CD8-positive, alpha-beta T cell (primary cell): ENCODE measurements at regions of chr11 and their contacts with region 1.

Region 1: DNA sequence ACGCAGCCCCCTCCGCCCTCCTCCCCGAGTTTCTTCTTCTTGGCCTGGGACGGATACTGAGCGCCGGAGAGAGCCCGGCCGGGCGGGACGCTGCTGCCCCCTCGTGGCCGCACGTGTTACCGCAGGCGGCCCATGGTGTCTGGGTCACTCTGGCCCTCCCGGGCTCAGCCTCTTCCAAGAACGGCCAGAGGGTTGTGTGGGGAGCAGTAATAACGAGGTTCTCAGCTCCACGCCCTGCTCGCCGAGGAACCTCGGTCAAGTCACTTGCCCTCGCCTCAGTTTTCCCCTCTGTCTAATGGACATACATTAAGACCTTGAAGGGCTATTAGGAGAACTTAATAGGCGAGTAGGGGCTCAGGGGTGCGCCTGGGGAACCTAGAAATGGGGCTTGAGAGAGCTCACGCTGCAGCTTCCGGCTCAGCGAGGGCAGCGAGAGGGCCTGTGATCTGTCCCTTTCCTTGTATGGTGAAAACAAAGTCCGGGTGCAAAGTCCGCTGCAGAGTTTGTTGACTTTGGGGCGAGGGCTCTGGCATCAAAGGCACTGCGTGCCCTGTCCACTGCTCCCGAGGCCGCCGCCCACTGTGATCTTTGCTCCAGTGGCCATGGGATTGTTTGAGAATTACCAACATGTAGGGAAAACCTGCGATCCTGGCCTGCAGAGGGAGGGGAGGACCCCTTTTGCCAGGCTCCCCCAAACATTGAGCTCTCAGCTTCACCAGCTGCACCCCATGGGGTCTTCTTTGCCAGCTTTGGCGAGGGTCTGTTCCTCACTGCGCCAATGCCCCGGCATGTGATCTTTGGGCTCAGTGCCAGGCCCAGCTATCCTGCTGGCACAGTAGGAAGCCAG is 14.4 kb upstream of the LRP5 start:
- DNase-seq: peak; percentile 52 to 88 (median 70)
- ATAC-seq: peak; percentile 98
- H3K4me3 ChIP-seq: no peak overlapping the region
- H3K4me3 Mint-ChIP-seq: no peak overlapping the region
- H3K27ac ChIP-seq: no peak overlapping the region
- H3K27ac Mint-ChIP-seq: no peak overlapping the region
- H3K4me1 ChIP-seq: peaks cover 3% of the 10 kb centered on the region
- H3K4me1 Mint-ChIP-seq: no peaks in the 10 kb centered on the region
- H3K27me3 ChIP-seq: no peaks in the 10 kb centered on the region
- H3K27me3 Mint-ChIP-seq: no peaks in the 10 kb centered on the region
- CTCF ChIP-seq: peak; percentile 95

Region 2: GRCh38 chr11:68251765-68252164 is 46.3 kb before region 1 on chr11:
- CTCF ChIA-PET with region 1: interaction called, 359 read pairs
- POLR2A ChIA-PET with region 1: interaction called, 3 read pairs
- intact Hi-C with region 1: no loop called
- DNase-seq: no peak
- ATAC-seq: no peak
- H3K4me3 ChIP-seq: no peak overlapping the region
- H3K4me3 Mint-ChIP-seq: no peak overlapping the region
- H3K27ac ChIP-seq: no peak overlapping the region
- H3K27ac Mint-ChIP-seq: no peak overlapping the region
- H3K4me1 ChIP-seq: no peaks in the 10 kb centered on the region
- H3K4me1 Mint-ChIP-seq: no peaks in the 10 kb centered on the region
- H3K27me3 ChIP-seq: no peaks in the 10 kb centered on the region
- H3K27me3 Mint-ChIP-seq: no peaks in the 10 kb centered on the region
- CTCF ChIP-seq: no peak

Region 3: GRCh38 chr11:68271781-68272608 is 26.0 kb before region 1 on chr11 and contains the start of gene C11orf24:
- CTCF ChIA-PET with region 1: interaction called, 359 read pairs
- POLR2A ChIA-PET with region 1: interaction called, 10 read pairs
- intact Hi-C with region 1: loop called (anchors 1 kb)
- DNase-seq: peak; percentile 81 to 97 (median 93)
- ATAC-seq: peak; percentile 86
- H3K4me3 ChIP-seq: peak within 1 kb of the TSS; percentile 71 to 95
- H3K4me3 Mint-ChIP-seq: peak within 1 kb of the TSS; percentile 91
- H3K27ac ChIP-seq: peak within 1 kb of the TSS; percentile 93 to 97
- H3K27ac Mint-ChIP-seq: peak within 1 kb of the TSS; percentile 95
- H3K4me1 ChIP-seq: peaks cover 26% of the 10 kb centered on the region
- H3K4me1 Mint-ChIP-seq: peaks cover 32% of the 10 kb centered on the region
- H3K27me3 ChIP-seq: no peaks in the 10 kb centered on the region
- H3K27me3 Mint-ChIP-seq: no peaks in the 10 kb centered on the region
- CTCF ChIP-seq: no peak
- total RNA-seq, gene C11orf24: 6.5 to 8.2 TPM

Region 4: DNA sequence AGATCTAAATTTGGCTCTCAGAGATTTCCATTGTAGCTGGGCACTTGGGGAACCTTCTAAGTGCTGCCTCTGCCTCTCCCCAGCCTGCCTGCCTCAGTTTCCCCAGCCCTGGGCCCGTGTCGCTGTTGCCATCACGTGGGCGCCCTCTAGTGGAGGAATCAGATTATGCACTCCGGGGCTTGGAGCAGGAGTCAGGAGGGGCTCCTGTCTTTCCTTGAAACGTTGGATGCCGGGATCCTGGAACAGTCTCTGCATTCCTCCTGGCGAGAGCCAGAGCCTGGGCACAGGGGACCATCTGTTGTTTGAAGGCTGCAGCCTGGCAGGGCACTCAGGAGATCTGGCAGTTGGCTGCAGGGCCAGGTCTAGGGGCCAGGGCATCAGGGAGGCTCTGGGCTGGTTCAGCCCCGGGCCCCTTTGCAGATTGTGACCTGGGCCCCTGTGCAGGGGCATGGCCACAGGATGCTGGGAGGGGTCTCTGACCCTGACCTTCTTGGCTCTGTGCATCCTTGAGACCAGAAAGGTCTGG is 86.0 kb after region 1 on chr11:
- CTCF ChIA-PET with region 1: interaction called, 13 read pairs
- POLR2A ChIA-PET with region 1: no interaction called
- intact Hi-C with region 1: no loop called
- DNase-seq: peak; percentile 34 to 78 (median 61)
- ATAC-seq: peak; percentile 44
- H3K4me3 ChIP-seq: no peak overlapping the region
- H3K4me3 Mint-ChIP-seq: no peak overlapping the region
- H3K27ac ChIP-seq: no peak overlapping the region
- H3K27ac Mint-ChIP-seq: no peak overlapping the region
- H3K4me1 ChIP-seq: peaks cover 4% of the 10 kb centered on the region
- H3K4me1 Mint-ChIP-seq: peaks cover 15% of the 10 kb centered on the region
- H3K27me3 ChIP-seq: no peaks in the 10 kb centered on the region
- H3K27me3 Mint-ChIP-seq: peaks cover 3% of the 10 kb centered on the region
- CTCF ChIP-seq: peak; percentile 94